Activated CD4-positive, alpha-beta memory T cell treated with anti-CD3 and anti-CD28 coated beads for 36 hours (primary cell): ENCODE measurements at regions of chr12 and their contacts with region 1.

Region 1: GRCh38 chr12:103956516-103957027 is 9.1 kb upstream of the TDG start:
- DNase-seq: no peak
- H3K4me3 Mint-ChIP-seq: peak overlapping the region; percentile 97
- H3K27ac Mint-ChIP-seq: peak overlapping the region; percentile 94
- H3K4me1 Mint-ChIP-seq: peaks cover 38% of the 10 kb centered on the region
- H3K27me3 Mint-ChIP-seq: no peaks in the 10 kb centered on the region

Region 2: DNA sequence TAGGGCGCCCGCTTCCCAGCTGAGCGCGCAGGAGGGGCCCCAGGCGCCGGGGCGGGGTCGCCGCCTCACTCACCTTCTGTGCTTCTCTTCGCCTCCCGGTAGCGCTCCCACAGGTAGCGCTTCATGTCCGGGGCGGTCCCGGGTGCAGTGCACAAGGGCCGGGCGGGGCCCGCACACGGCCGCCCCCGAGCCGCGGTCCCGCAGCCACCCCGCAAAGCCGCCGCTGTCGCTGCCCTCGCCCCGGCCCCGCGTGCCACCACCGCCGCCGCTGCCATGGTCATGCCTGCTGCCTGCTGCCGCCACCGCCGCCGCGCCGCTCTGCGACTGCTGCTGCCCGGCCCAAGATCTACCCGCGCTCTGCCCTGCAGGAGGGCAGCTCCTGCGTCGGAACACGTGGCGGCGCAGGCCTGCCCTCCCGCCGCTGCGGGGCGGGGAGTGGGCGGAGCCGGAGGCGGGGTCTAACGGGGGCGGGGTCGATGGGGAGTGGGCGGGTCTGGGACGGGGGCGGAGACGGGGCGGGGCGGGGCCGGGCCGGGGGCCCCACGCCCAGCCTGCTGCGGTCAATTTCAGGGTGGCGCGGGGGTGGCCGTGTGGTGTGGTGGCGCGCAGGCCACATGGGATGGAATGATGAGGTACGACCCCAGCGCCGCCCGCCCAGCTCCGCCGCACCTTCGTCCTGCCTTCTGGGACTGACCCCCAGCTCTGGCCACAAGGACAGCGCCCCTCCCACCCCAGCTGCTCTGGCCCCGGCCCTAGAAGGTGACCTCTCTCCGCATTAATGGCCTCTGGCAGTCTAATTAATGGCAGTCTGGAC is 115.5 kb before region 1 on chr12 and contains the start of gene NT5DC3:
- CTCF ChIA-PET with region 1: no interaction called
- POLR2A ChIA-PET with region 1: no interaction called
- intact Hi-C with region 1: loop called (anchors 1 kb)
- DNase-seq: peak; percentile 89
- H3K4me3 Mint-ChIP-seq: peak within 1 kb of the TSS; percentile 76
- H3K27ac Mint-ChIP-seq: peak within 1 kb of the TSS; percentile 31
- H3K4me1 Mint-ChIP-seq: peaks cover 13% of the 10 kb centered on the region
- H3K27me3 Mint-ChIP-seq: no peaks in the 10 kb centered on the region
- total RNA-seq, gene NT5DC3: 6.8 to 7.5 TPM

Region 3: DNA sequence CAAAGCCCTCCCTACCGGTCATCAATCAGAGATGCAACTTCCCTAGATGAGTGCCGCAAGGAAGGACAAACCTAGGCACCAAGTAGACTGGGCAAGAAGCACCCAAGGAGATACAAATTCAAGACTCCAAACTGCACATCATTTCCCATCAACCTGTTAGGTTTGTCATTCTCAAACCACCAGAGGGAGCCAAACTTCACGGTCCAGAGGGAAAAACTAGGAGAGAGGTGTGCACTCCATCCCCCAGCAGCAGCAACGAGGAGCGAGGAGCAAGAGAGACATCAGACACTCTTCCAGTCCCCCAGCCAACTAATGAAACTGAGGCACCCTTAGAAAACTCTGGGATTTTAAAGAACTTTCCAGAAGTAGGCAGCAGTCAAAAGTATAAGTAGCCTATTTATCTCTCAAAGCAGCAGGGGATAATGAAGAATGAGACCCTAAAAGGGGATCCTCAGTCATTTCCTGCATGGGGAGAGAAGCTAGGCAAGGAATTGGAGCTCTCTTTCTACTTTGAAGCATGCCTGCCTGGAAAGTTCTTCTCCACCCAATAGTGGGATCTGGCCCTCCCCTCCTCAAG is 78.5 kb before region 1 on chr12:
- CTCF ChIA-PET with region 1: no interaction called
- POLR2A ChIA-PET with region 1: no interaction called
- intact Hi-C with region 1: loop called (anchors 2 kb)
- DNase-seq: peak; percentile 70
- H3K4me3 Mint-ChIP-seq: no peak overlapping the region
- H3K27ac Mint-ChIP-seq: no peak overlapping the region
- H3K4me1 Mint-ChIP-seq: peaks cover 18% of the 10 kb centered on the region
- H3K27me3 Mint-ChIP-seq: no peaks in the 10 kb centered on the region